ENCODE measurements at regions of chr1 and their contacts with region 1.

Region 1: DNA sequence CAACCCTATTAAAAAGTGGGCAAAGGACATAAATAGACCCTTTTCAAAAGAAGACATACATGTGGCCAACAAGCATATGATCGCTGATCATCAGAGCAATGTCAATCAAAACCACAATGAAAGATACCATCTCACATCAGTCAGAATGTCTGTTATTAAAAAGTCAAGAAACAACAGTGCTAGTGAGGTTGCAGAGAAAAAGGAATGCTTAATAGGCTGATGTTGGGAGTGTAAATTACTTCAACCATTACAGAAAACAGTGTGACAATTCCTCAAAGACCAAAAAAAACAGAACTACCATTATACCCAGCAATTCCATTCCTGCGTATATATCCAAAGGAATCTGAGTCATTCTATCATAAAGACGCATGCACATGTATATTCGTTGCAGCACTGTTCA is 13.2 kb downstream of the USH2A start:
- DNase-seq: no peak
- ATAC-seq: no peak
- H3K4me3 ChIP-seq: no peak overlapping the region
- H3K27ac ChIP-seq: no peak overlapping the region
- H3K4me1 ChIP-seq: no peaks in the 10 kb centered on the region
- H3K27me3 ChIP-seq: no peaks in the 10 kb centered on the region
- CTCF ChIP-seq: no peak

Region 2: DNA sequence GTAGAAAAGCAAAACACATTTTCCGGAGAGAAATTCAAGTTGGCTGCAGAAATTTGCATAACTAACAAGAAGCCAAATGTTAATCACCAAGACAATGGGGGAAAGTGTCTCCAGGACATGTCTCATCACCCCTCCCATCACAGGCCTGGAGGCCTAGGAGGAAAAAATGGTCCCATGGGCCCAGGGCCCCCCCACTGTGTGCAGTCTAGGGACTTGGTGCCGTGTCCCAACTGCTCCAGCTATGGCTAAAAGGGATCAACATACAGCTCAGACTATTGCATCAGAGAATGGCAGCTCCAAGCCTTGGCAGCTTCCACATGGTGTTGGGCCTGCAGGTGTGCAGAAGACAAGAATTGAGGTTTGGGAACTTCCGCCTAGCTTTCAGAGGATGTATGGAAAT is 125.0 kb before region 1 on chr1:
- intact Hi-C with region 1: no loop called
- DNase-seq: no peak
- ATAC-seq: no peak
- H3K4me3 ChIP-seq: no peak overlapping the region
- H3K27ac ChIP-seq: no peak overlapping the region
- H3K4me1 ChIP-seq: no peaks in the 10 kb centered on the region
- H3K27me3 ChIP-seq: no peaks in the 10 kb centered on the region
- CTCF ChIP-seq: no peak

Region 3: GRCh38 chr1:216437603-216438002 is 27.6 kb after region 1 on chr1:
- intact Hi-C with region 1: loop called in 1 of 2 experiments (anchors 2 kb)
- DNase-seq: no peak
- ATAC-seq: no peak
- H3K4me3 ChIP-seq: no peak overlapping the region
- H3K27ac ChIP-seq: no peak overlapping the region
- H3K4me1 ChIP-seq: no peaks in the 10 kb centered on the region
- H3K27me3 ChIP-seq: no peaks in the 10 kb centered on the region
- CTCF ChIP-seq: no peak

Region 4: GRCh38 chr1:216464489-216464888 is 54.5 kb after region 1 on chr1:
- intact Hi-C with region 1: no loop called
- DNase-seq: no peak
- ATAC-seq: no peak
- H3K4me3 ChIP-seq: no peak overlapping the region
- H3K27ac ChIP-seq: no peak overlapping the region
- H3K4me1 ChIP-seq: no peaks in the 10 kb centered on the region
- H3K27me3 ChIP-seq: no peaks in the 10 kb centered on the region
- CTCF ChIP-seq: no peak